Dendritic cell treated with granulocyte-macrophage colony-stimulating factor and Interleukin-4, amounts not matched to agents 40 ng/mL and 50 ng/mL, for 4 days (primary cell): ENCODE measurements at regions of chr9 and their contacts with region 1.

Region 1: DNA sequence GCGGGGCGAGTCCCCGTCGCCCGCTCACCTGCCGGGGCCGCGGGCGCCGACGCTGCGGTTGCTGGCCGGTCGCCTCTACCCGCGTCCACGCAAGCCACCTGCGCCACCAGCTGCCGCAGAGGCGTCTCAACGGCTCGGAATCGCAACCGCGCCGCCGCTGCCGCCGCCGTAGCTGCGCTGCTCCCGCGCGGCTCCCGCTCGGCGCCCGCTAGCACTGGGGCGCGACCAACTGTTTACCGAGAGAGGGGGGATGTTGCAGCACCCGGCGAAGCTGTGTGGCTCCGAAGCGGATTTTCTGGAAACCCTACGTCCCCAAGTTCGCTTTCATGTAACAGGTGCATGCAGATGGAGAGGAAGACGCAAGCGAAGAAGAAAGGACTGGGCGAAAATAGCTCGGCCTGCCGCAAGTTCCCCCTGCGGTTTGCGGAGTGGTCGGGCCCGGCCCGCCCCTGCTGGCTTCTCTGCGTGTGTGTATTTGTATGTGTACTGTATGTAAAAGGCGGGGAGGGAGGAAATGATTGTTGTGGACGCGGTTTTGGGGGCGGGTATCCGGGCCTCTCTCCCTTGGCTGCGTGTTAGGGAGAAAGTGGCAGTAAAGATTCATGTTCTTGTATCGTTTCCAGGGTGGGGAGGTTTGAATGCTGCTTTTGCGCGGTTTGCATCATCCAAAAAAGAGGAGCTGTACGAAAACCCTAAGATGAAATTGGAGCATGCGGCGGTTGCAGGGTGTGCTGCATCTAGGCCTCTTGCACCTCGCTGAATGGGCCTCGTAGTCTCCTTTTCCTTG is at the start of gene PSIP1:
- H3K4me3 Mint-ChIP-seq: peak within 1 kb of the TSS; percentile 92
- H3K27ac Mint-ChIP-seq: peak within 1 kb of the TSS; percentile 99
- H3K4me1 Mint-ChIP-seq: peaks cover 47% of the 10 kb centered on the region
- H3K27me3 Mint-ChIP-seq: no peaks in the 10 kb centered on the region

Region 2: GRCh38 chr9:15306757-15307534 is 204.0 kb before region 1 on chr9 and contains the start of gene TTC39B:
- intact Hi-C with region 1: loop called (anchors 5 kb)
- H3K4me3 Mint-ChIP-seq: peak within 1 kb of the TSS; percentile 99
- H3K27ac Mint-ChIP-seq: peak within 1 kb of the TSS; percentile 92
- H3K4me1 Mint-ChIP-seq: peaks cover 32% of the 10 kb centered on the region
- H3K27me3 Mint-ChIP-seq: peaks cover 14% of the 10 kb centered on the region

Region 3: DNA sequence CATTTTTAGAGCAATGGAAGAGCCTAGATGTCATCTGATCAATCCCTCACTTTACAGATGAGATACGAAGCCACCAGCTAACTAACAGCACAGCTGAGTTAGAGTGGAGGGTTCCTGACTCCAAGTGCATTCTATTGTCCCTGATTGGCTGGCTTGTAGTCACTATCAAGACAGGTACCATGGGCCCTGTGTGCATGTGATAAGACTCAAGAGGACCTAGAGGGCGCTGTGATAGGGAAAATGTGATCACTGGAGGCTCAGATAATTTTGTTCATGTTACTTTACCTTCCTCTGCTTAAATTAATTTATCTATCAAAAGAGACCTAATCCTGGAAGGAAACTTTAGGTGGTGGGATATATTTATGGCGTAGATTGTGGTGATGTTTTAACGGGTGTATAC is 107.8 kb before region 1 on chr9:
- intact Hi-C with region 1: no loop called
- H3K4me3 Mint-ChIP-seq: no peak overlapping the region
- H3K27ac Mint-ChIP-seq: no peak overlapping the region
- H3K4me1 Mint-ChIP-seq: peaks cover 5% of the 10 kb centered on the region
- H3K27me3 Mint-ChIP-seq: no peaks in the 10 kb centered on the region

Region 4: DNA sequence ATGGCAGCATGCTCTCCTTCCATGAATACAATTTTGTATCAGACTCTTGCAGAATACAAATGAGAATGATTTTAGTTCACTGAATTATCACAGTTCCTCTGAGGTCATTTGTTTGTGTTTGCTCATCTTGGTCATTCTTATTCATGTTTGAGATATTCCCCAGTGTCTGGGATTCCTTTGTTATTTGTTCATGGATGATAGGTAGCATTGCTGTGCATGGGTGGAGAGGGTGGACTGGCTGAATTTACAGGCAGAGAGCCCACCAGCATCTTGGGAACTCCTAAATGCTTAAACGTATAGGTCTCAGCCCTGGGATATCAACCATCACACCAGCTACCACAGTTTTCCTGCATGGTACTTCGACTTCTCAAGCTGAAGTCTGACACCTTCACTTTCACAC is 501.6 kb after region 1 on chr9:
- intact Hi-C with region 1: no loop called
- H3K4me3 Mint-ChIP-seq: no peak overlapping the region
- H3K27ac Mint-ChIP-seq: no peak overlapping the region
- H3K4me1 Mint-ChIP-seq: no peaks in the 10 kb centered on the region
- H3K27me3 Mint-ChIP-seq: no peaks in the 10 kb centered on the region